MCF 10A (cell line): ENCODE measurements at regions of chrX and their contacts with region 1.

Region 1: GRCh38 chrX:9995855-9996339 is 28.7 kb downstream of the CLDN34 start:
- DNase-seq: peak; percentile 85
- H3K4me3 Mint-ChIP-seq: no peak overlapping the region
- H3K27ac Mint-ChIP-seq: no peak overlapping the region
- H3K4me1 Mint-ChIP-seq: no peaks in the 10 kb centered on the region
- H3K27me3 Mint-ChIP-seq: no peaks in the 10 kb centered on the region
- CTCF ChIP-seq: peak; percentile 96

Region 2: GRCh38 chrX:9935436-9935835 is 60.5 kb before region 1 on chrX:
- CTCF ChIA-PET with region 1: no interaction called
- POLR2A ChIA-PET with region 1: no interaction called
- intact Hi-C with region 1: no loop called
- DNase-seq: no peak
- H3K4me3 Mint-ChIP-seq: no peak overlapping the region
- H3K27ac Mint-ChIP-seq: no peak overlapping the region
- H3K4me1 Mint-ChIP-seq: no peaks in the 10 kb centered on the region
- H3K27me3 Mint-ChIP-seq: no peaks in the 10 kb centered on the region
- CTCF ChIP-seq: no peak

Region 3: GRCh38 chrX:10111364-10112148 is 115.7 kb after region 1 on chrX:
- CTCF ChIA-PET with region 1: interaction called, 178 read pairs
- POLR2A ChIA-PET with region 1: interaction called, 3 read pairs
- intact Hi-C with region 1: no loop called
- DNase-seq: no peak
- H3K4me3 Mint-ChIP-seq: no peak overlapping the region
- H3K27ac Mint-ChIP-seq: no peak overlapping the region
- H3K4me1 Mint-ChIP-seq: peaks cover 6% of the 10 kb centered on the region
- H3K27me3 Mint-ChIP-seq: no peaks in the 10 kb centered on the region
- CTCF ChIP-seq: no peak